AG04449 (cell line): ENCODE measurements at regions of chr2 and their contacts with region 1.

Region 1: DNA sequence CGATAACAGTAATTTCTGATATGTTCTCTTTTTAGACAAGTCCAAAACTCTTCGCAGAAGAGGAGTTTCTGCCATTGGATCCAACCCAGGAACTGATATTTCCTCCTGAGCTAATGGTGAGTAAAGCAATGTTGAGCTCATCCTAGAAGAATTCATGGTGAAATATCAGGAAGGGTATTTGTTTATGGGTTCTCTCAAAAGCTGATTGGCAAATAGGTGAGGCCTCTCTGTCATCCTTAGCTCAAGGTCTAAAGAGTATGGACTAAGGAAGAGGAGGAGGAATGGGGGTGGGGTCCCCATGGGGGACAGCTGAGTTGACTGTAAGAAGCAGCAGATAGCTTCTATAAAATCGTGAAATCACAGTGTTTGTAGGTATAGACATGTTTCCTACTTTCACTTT is 18.2 kb downstream of the AOX1 start:
- DNase-seq: no peak
- H3K4me3 ChIP-seq: no peak overlapping the region
- CTCF ChIP-seq: no peak

Region 2: DNA sequence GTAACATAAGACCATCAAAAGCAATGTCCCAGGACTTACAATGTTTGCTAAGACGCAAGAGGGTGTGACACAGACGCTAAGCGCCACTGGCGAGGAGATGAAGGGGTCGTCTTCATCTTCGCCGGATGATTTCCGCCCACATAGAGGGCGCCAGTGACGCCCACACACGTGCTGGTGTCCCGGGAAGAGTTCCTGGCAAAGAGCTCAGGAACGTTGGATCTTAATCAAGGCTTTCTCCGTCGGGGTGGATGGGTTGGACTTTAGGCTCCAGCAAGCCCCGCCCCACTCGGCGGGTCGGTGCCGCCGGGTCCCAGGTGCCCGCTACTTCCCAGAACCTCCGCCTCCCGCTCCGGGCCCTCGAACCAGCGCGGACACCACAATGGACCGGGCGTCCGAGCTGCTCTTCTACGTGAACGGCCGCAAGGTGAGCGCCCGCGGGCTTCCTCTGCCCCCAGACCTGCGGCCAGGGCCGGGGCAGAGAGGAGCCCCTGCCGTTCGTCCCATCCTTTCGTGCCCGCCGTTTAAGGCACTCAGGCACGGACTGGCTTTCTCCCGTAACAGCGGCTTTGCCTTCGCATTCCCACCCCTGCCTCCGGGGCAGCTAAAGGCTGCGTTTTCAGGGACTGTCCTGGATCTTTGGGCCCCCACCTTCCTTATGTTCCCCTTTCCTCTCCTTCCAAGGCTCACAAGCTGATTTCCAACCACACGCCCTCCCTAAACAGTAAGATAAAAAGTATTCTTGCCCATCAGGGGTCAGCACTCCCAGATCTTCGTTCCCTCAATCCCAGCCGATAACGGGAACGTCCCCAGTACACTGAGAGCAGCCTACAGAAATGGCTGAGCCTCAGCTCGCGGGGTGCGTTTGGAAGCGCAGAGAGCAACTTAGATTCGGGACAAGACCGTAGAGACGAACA is 18.0 kb before region 1 on chr2 and contains the start of gene AOX1:
- CTCF ChIA-PET with region 1: interaction called, 19 read pairs
- POLR2A ChIA-PET with region 1: no interaction called
- DNase-seq: no peak
- H3K4me3 ChIP-seq: peak within 1 kb of the TSS; percentile 63
- CTCF ChIP-seq: peak; percentile 29

Region 3: GRCh38 chr2:200618587-200619021 is 14.6 kb after region 1 on chr2:
- CTCF ChIA-PET with region 1: interaction called, 21 read pairs
- POLR2A ChIA-PET with region 1: no interaction called
- DNase-seq: peak; percentile 45
- H3K4me3 ChIP-seq: no peak overlapping the region
- CTCF ChIP-seq: peak; percentile 36